ENCODE measurements at regions of chr7 and their contacts with region 1.

Region 1: DNA sequence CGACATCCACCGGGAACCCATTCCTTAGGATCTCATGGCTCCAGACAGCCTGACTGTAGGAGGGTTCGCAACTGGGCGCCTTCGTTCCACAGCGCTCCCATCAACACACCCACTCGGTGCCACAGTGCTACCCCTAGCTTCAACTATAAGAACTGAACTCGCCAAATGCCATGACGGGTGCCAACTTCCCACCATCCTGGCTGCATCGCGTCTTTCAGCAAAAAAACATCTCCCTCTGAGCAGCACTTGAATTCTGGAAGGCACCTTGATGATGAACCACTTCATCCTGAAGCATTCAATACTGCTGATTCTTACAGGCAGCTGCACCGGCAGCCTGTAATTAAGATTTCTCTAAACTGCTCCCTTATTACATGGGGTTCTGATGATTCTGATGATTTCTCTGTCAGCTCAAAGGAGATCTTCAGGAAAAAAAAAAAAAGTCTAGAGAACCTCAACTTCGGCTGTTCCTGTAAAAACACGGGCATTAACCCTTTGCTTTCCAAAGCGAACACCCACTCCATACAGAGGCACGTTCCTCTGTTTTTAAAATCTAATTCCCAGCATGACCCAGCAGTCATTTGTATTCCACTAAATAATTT is 1.3 kb downstream of the CYTH3 start:
- DNase-seq: no peak
- CTCF ChIP-seq: peak; percentile 26

Region 2: DNA sequence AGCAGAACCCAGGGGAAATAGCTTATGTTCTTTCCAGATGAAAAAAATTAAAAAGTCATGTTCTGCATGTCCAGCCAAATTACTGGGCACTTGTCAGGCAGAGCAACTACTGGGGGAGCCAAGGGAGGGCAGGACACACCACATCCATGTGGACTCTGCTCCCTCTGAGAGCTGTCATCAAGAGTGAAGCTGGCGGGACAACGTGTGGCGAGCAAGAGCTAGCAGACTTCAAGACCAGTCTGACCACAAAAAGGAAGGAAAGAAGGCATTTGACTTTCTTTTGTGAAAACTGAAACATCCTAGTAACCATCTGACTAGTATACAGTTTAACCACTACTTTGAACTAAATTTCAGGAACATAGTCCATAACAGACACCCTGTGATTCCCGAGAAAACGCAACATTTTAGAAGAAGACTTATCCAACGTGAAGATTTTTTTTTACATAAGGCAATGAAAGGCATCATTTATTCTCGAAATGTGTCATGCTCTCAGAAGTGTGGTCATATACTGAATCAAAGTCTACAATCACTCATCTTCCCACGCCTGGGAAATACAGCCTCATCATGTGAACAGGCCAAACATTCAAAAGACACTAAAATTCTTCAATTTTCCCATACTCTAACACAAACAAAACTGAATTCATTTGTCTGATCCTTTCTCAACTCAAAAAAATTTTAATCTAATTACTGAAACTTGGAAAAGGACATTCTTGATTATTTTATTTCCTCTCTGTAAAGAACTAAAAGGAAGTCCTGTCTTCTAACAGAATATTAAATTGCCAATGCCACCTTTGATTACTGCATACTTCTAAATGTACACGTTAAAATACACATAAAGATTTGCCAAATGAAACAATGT is 14.3 kb before region 1 on chr7:
- CTCF ChIA-PET with region 1: interaction called, 28 read pairs
- POLR2A ChIA-PET with region 1: no interaction called
- DNase-seq: peak; percentile 62
- CTCF ChIP-seq: no peak

Region 3: DNA sequence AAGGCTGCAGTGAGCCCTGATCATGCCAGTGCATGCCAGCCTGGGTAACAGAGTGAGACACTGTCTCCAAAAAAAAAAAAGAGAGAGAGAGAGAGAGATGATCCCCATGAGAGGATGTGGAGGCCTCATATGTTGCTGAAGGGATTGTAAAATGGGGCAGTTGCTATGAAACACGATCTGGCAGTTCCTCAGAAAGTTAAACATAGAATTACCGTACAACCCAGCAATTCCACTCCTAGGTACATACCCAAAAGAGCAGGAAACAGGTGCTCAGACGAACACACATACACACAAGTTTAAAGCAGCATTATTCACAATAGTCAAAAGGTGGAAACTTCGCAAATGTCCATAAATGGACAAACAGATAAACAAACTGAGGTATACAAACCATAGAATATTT is 28.6 kb after region 1 on chr7:
- CTCF ChIA-PET with region 1: no interaction called
- POLR2A ChIA-PET with region 1: no interaction called
- DNase-seq: no peak
- CTCF ChIP-seq: no peak

Region 4: GRCh38 chr7:6317797-6318438 is 46.8 kb after region 1 on chr7:
- CTCF ChIA-PET with region 1: no interaction called
- POLR2A ChIA-PET with region 1: no interaction called
- DNase-seq: peak; percentile 48
- CTCF ChIP-seq: no peak